Esophagus muscularis mucosa (tissue), 4 donors: ENCODE measurements at regions of chr11 and their contacts with region 1.

Region 1: GRCh38 chr11:1916986-1917670 is 2.4 kb upstream of the TNNT3 start:
- DNase-seq: no peak
- H3K4me3 ChIP-seq: no peak overlapping the region
- H3K27ac ChIP-seq: no peak overlapping the region
- H3K4me1 ChIP-seq: peaks cover 25 to 33% (median 29%) of the 10 kb centered on the region in 4 donors
- H3K27me3 ChIP-seq: peaks cover 0 to 8% (median 0%) of the 10 kb centered on the region in 4 donors
- CTCF ChIP-seq: no peak
- EP300 ChIP-seq: no peak
- POLR2A ChIP-seq: no peak

Region 2: GRCh38 chr11:1478544-1478943 is 438.6 kb before region 1 on chr11:
- intact Hi-C with region 1: no loop called
- DNase-seq: no peak
- H3K4me3 ChIP-seq: no peak overlapping the region
- H3K27ac ChIP-seq: peak overlapping the region; percentile 89 to 96 (median 92)
- H3K4me1 ChIP-seq: peaks cover 47 to 64% (median 59%) of the 10 kb centered on the region in 4 donors
- H3K27me3 ChIP-seq: no peaks in the 10 kb centered on the region
- CTCF ChIP-seq: no peak
- EP300 ChIP-seq: no peak
- POLR2A ChIP-seq: no peak

Region 3: DNA sequence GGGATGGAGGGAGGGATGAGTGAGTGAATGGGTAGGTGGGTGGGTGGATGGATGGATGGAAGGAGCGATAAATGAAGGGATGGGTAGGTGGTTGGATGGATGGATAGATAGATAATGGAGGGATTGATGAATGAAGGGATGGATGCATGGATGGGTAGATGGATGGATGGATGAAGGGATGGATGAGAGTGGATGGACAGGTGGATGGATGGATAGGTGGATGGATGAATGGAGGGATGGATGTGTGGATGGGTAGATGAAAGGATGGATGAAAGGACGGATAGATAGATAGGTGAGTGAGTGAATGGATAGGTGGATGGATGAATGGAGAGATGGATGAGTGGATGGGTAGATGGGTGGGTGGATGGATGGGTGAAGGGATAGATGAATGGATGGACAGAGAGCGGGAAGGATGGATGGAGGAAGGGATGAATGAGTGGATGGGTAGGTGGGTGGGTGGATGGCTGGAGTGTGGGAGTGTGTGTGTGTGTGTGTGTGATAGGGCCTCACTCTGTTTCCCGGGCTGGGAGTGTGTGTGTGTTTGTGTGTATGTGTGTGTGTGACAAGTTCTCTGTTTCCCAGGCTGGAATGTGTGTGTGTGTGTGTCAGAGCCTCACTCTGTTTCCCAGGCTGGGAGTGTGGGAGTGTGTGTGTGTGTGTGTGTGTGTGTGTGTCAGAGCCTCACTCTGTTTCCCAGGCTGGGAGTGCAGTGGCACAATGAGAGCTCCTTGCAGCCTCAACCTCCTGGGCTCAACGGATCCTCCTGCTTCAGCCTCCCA is 23.4 kb before region 1 on chr11:
- intact Hi-C with region 1: loop called (anchors 1 kb)
- DNase-seq: no peak
- H3K4me3 ChIP-seq: no peak overlapping the region
- H3K27ac ChIP-seq: no peak overlapping the region
- H3K4me1 ChIP-seq: peaks cover 0 to 4% (median 2%) of the 10 kb centered on the region in 4 donors
- H3K27me3 ChIP-seq: peaks cover 0 to 10% (median 0%) of the 10 kb centered on the region in 4 donors
- CTCF ChIP-seq: no peak
- EP300 ChIP-seq: no peak
- POLR2A ChIP-seq: no peak

Region 4: GRCh38 chr11:1939006-1939625 is 22.0 kb after region 1 on chr11:
- intact Hi-C with region 1: loop called (anchors 2 kb)
- DNase-seq: no peak
- H3K4me3 ChIP-seq: peak overlapping the region in 1 of 4 donors; percentile 10
- H3K27ac ChIP-seq: peak overlapping the region in 1 of 4 donors; percentile 16
- H3K4me1 ChIP-seq: peaks cover 9 to 15% (median 13%) of the 10 kb centered on the region in 4 donors
- H3K27me3 ChIP-seq: peaks cover 0 to 22% (median 0%) of the 10 kb centered on the region in 4 donors
- CTCF ChIP-seq: no peak
- EP300 ChIP-seq: no peak
- POLR2A ChIP-seq: no peak

Region 5: GRCh38 chr11:2002042-2002776 is 85.1 kb after region 1 on chr11:
- intact Hi-C with region 1: no loop called
- DNase-seq: no peak
- H3K4me3 ChIP-seq: no peak overlapping the region
- H3K27ac ChIP-seq: no peak overlapping the region
- H3K4me1 ChIP-seq: no peaks in the 10 kb centered on the region
- H3K27me3 ChIP-seq: no peaks in the 10 kb centered on the region
- CTCF ChIP-seq: no peak
- EP300 ChIP-seq: no peak
- POLR2A ChIP-seq: no peak

Region 6: GRCh38 chr11:2036863-2037486 is 119.8 kb after region 1 on chr11:
- intact Hi-C with region 1: no loop called
- DNase-seq: no peak
- H3K4me3 ChIP-seq: no peak overlapping the region
- H3K27ac ChIP-seq: no peak overlapping the region
- H3K4me1 ChIP-seq: no peaks in the 10 kb centered on the region
- H3K27me3 ChIP-seq: no peaks in the 10 kb centered on the region
- CTCF ChIP-seq: no peak
- EP300 ChIP-seq: no peak
- POLR2A ChIP-seq: no peak